Endothelial cell of umbilical vein (primary cell): ENCODE measurements at regions of chr12 and their contacts with region 1.

Region 1: GRCh38 chr12:67441736-67442346 is 172.7 kb downstream of the CAND1 start:
- DNase-seq: peak; percentile 47
- H3K4me3 ChIP-seq: no peak overlapping the region
- H3K27ac ChIP-seq: no peak overlapping the region
- H3K4me1 ChIP-seq: no peaks in the 10 kb centered on the region
- H3K27me3 ChIP-seq: no peaks in the 10 kb centered on the region
- CTCF ChIP-seq: peak; percentile 68 to 69
- POLR2A ChIP-seq: no peak

Region 2: DNA sequence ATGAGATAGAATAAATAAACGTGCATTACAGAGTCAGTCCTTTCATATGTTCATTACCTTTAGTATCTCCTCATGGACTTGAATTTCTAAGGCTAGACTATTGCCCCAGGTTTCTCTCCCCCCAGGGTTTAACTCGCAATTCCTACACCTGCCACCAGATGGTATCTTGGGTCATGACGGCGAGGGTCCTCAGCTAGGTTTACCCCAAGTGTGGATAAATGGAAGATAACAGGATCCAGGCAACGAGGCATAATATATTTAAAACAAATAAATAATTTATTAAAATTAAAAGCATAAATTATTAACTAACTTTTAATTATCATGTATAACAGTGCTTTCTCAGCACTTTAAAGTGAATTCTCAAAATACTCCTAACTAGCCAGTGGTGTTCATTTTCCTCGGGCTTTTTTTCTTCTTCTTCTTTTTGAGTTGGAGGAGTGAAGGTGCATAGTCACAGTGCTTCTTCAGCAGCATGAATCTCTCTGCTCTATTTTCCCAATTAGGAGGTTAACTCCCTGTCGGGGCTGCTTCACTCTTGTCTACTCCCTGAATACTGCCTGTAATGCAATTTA is 416.2 kb before region 1 on chr12:
- CTCF ChIA-PET with region 1: no interaction called
- POLR2A ChIA-PET with region 1: no interaction called
- dilution Hi-C with region 1: no loop called
- intact Hi-C with region 1: loop called (anchors 2 kb)
- DNase-seq: peak; percentile 44
- H3K4me3 ChIP-seq: no peak overlapping the region
- H3K27ac ChIP-seq: no peak overlapping the region
- H3K4me1 ChIP-seq: no peaks in the 10 kb centered on the region
- H3K27me3 ChIP-seq: no peaks in the 10 kb centered on the region
- CTCF ChIP-seq: peak; percentile 54 to 60
- POLR2A ChIP-seq: no peak

Region 3: GRCh38 chr12:67161322-67161918 is 280.4 kb before region 1 on chr12:
- CTCF ChIA-PET with region 1: interaction called, 4 read pairs
- POLR2A ChIA-PET with region 1: no interaction called
- dilution Hi-C with region 1: no loop called
- intact Hi-C with region 1: loop called (anchors 2 kb)
- DNase-seq: peak; percentile 39
- H3K4me3 ChIP-seq: no peak overlapping the region
- H3K27ac ChIP-seq: no peak overlapping the region
- H3K4me1 ChIP-seq: no peaks in the 10 kb centered on the region
- H3K27me3 ChIP-seq: no peaks in the 10 kb centered on the region
- CTCF ChIP-seq: peak; percentile 26 to 43
- POLR2A ChIP-seq: no peak

Region 4: DNA sequence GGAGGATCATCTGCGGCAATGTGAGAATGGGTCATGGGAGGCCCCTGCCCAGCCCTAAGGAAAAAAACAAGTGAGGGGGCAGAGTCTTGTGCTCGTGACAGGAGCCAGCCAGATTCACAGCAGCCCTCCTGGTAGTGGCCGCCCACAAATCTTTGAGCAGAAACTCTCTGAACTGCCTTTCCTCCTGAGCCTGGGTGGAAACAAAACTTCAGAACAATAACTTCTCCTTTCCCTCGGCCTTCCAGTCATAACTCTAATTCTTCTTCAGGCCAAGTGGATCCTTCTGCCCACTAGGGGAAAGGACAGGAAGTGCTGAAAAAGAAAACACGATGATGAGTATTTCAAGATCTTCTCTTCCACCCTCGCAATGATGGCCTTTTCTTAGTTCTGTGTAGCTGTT is 15.9 kb after region 1 on chr12:
- CTCF ChIA-PET with region 1: no interaction called
- POLR2A ChIA-PET with region 1: no interaction called
- dilution Hi-C with region 1: no loop called
- intact Hi-C with region 1: no loop called
- DNase-seq: no peak
- H3K4me3 ChIP-seq: no peak overlapping the region
- H3K27ac ChIP-seq: no peak overlapping the region
- H3K4me1 ChIP-seq: no peaks in the 10 kb centered on the region
- H3K27me3 ChIP-seq: no peaks in the 10 kb centered on the region
- CTCF ChIP-seq: no peak
- POLR2A ChIP-seq: no peak

Region 5: DNA sequence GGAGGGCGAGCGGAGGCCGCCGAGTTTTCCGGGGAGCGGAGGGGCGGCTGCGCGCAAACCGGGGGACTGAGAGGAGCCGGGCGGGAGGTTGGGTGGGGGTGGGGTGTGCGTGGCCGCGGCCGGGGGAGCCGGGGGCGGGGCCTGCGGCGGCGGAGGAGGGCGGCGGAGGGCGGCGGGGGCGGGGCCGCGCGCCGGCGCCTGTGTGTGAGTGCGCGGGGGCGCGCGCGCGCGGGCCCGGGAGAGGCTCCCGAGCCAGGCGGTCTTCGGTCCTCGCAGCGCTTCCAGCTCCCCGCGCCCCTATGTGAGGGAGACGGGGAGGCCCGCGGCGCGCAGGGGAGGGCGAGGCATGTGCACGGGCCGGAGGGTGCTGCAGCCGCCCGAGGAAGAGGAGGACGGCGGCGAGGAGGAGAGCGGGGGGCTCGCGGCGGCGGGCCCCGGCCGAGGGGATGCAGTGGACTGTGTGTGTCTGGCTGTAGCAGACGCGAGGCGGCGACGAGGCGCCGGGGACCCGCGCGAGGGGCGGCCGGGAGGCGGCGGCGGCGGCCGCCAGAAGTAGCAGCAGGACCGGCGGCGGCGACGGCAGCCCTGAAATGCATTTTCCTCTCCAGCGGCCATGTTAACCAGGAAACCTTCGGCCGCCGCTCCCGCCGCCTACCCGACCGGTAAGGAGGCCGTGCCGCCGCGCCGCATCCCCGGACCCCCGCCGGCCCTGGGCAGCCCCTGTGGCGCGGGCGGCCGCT is 206.8 kb after region 1 on chr12 and contains the start of gene DYRK2:
- CTCF ChIA-PET with region 1: no interaction called
- POLR2A ChIA-PET with region 1: no interaction called
- dilution Hi-C with region 1: no loop called
- intact Hi-C with region 1: loop called (anchors 5 kb)
- DNase-seq: peak; percentile 76
- H3K4me3 ChIP-seq: peak within 1 kb of the TSS; percentile 58 to 90 (median 82)
- H3K27ac ChIP-seq: peak within 1 kb of the TSS; percentile 58
- H3K4me1 ChIP-seq: peaks cover 11% of the 10 kb centered on the region
- H3K27me3 ChIP-seq: no peaks in the 10 kb centered on the region
- CTCF ChIP-seq: no peak
- POLR2A ChIP-seq: peak; percentile 77
- total RNA-seq, gene DYRK2: 11.0 and 13.7 TPM in 2 replicates